ENCODE measurements at regions of chr22 and their contacts with region 1.

Region 1: GRCh38 chr22:48071828-48072227 is 1309.4 kb downstream of the TBC1D22A start:
- DNase-seq: peak; percentile 88
- H3K4me3 ChIP-seq: peak overlapping the region; percentile 31
- H3K27ac ChIP-seq: peak overlapping the region; percentile 92
- H3K4me1 ChIP-seq: peaks cover 69% of the 10 kb centered on the region
- CTCF ChIP-seq: no peak

Region 2: GRCh38 chr22:47626428-47627390 is 445.1 kb before region 1 on chr22:
- CTCF ChIA-PET with region 1: no interaction called
- POLR2A ChIA-PET with region 1: no interaction called
- intact Hi-C with region 1: loop called (anchors 5 kb)
- DNase-seq: peak; percentile 34
- H3K4me3 ChIP-seq: no peak overlapping the region
- H3K27ac ChIP-seq: no peak overlapping the region
- H3K4me1 ChIP-seq: no peaks in the 10 kb centered on the region
- CTCF ChIP-seq: peak; percentile 63

Region 3: DNA sequence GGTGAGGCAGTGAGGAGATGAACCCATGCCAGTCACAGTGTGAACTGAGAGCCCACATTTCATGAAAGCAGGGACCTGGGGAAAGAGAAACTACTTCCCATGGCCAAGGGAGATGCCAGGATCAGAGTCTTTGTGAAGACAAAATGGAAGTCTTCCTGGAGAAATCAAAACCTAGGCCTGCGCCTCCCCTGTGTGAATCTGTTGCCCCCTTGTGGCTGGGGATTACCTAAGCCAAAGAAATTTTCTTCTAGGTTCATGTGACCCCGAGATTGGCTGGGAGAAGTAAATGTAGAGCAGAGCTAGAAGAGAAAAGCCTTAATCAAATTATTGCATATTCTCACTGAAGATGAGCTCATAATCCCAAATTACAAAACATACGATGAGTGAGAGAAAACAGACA is 234.1 kb before region 1 on chr22:
- CTCF ChIA-PET with region 1: no interaction called
- POLR2A ChIA-PET with region 1: no interaction called
- intact Hi-C with region 1: loop called (anchors 1 kb)
- DNase-seq: peak; percentile 65
- H3K4me3 ChIP-seq: no peak overlapping the region
- H3K27ac ChIP-seq: no peak overlapping the region
- H3K4me1 ChIP-seq: peaks cover 28% of the 10 kb centered on the region
- CTCF ChIP-seq: peak; percentile 86

Region 4: DNA sequence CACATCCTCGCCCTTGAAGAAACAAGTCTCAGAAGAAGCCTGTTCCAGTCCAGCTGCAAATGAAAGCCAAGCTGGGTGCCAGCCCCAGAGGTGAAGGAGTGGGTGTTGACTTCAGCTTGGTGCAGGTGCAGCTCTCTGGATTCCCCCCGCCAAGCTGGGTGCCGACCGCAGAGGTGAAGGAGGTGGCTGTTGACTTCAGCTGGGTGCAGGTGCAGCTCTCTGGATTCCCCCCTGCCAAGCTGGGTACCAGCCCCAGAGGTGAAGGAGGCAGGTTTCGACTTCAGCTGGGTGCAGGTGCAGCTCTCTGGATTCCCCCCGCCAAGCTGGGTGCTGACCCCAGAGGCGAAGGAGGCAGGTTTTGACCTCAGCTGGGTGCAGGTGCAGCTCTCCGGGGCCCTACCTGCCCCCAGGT is 75.4 kb before region 1 on chr22:
- CTCF ChIA-PET with region 1: no interaction called
- POLR2A ChIA-PET with region 1: no interaction called
- intact Hi-C with region 1: loop called (anchors 1 kb)
- DNase-seq: peak; percentile 95
- H3K4me3 ChIP-seq: no peak overlapping the region
- H3K27ac ChIP-seq: peak overlapping the region; percentile 83
- H3K4me1 ChIP-seq: peaks cover 36% of the 10 kb centered on the region
- CTCF ChIP-seq: no peak

Region 5: DNA sequence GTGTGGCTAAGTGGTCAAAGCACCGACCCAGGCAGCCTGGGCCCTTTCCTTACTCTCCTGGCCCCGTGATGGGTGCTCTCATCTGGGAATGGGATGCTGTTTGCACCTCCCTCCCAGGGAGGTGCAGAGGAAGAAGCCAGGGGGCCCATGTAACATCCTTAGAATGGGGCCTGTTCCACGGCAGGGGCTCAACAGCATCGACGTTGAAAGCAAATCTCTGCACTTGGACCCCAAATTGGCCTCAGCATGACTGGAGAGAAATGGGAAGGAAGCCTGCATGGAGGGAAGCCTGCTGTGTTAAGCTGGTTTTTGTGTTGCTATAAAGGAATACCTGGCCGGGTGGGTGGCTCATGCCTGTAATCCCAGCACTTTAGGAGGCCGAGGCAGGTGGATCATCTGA is 21.0 kb before region 1 on chr22:
- CTCF ChIA-PET with region 1: no interaction called
- POLR2A ChIA-PET with region 1: no interaction called
- intact Hi-C with region 1: no loop called
- DNase-seq: no peak
- H3K4me3 ChIP-seq: no peak overlapping the region
- H3K27ac ChIP-seq: no peak overlapping the region
- H3K4me1 ChIP-seq: peaks cover 32% of the 10 kb centered on the region
- CTCF ChIP-seq: no peak

Region 6: GRCh38 chr22:48105259-48105658 is 33.4 kb after region 1 on chr22:
- CTCF ChIA-PET with region 1: no interaction called
- POLR2A ChIA-PET with region 1: no interaction called
- intact Hi-C with region 1: no loop called
- DNase-seq: no peak
- H3K4me3 ChIP-seq: no peak overlapping the region
- H3K27ac ChIP-seq: no peak overlapping the region
- H3K4me1 ChIP-seq: peaks cover 38% of the 10 kb centered on the region
- CTCF ChIP-seq: no peak

Region 7: DNA sequence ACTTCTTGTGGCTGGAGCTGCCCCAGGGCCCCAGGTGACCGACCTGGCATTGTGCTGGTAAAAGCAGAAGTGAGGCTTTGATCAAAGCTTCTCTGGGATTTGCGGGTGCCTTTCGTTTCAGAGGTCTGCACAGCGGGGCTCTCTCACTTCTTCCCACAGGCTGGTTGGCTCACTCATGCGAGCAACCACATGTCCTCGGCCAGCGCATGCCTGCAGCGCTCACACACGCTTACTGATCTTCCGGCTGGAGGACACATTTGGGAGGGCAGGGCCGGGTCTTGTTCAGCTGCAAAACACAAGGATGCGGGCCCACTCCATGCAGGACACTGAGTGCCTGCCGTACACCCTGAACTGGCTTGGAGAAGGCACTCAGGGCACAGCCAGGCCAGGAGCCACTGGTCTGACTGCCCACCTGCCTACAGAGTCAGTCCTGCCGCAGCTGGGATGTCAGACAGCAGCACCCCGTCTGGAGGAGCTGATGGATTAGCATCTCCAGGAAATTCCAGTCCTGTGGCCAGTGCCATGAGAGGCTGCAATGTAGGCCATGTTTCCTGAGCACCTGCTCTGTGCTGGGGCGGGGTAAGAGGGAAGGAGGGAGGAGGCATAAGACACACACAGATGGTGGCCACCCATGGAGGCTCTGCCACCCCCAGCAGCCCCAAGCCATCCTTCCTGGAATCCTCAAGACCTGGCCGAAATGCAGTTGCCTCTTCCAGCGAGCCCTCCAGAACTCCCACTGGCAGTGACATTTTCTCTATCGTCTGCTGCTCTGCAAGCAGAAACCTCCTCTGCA is 372.7 kb after region 1 on chr22:
- CTCF ChIA-PET with region 1: no interaction called
- POLR2A ChIA-PET with region 1: no interaction called
- intact Hi-C with region 1: loop called (anchors 1 kb)
- DNase-seq: peak; percentile 92
- H3K4me3 ChIP-seq: peak overlapping the region; percentile 38
- H3K27ac ChIP-seq: peak overlapping the region; percentile 55
- H3K4me1 ChIP-seq: peaks cover 34% of the 10 kb centered on the region
- CTCF ChIP-seq: no peak